ENCODE measurements at regions of chr1 and their contacts with region 1.

Region 1: DNA sequence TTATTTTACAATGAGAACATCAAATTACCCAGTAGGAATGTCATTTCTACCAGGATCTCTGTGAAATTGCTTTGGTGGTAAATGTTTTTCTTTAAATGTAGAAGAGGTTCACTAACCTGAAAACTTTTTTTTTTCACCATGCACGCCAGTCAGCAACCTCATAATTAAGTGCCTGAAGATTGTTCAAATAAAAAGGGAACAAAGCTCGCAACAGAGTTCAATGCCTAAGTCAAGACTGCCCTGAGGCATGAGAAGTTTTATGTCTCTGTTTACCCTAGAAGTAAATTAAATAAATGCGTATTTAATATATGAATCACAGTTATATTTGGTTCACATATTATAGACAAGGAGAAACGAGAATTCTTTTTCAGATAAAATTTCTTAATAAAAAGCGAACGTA is 13.8 kb upstream of the SYDE2 start:
- DNase-seq: no peak
- ATAC-seq: no peak
- H3K4me3 ChIP-seq: no peak overlapping the region
- H3K4me3 Mint-ChIP-seq: no peak overlapping the region
- H3K27ac ChIP-seq: no peak overlapping the region
- H3K27ac Mint-ChIP-seq: no peak overlapping the region
- H3K4me1 ChIP-seq: no peaks in the 10 kb centered on the region
- H3K4me1 Mint-ChIP-seq: no peaks in the 10 kb centered on the region
- H3K27me3 ChIP-seq: peaks cover 0 to 4% of the 10 kb centered on the region in 2 experiments
- H3K27me3 Mint-ChIP-seq: peaks cover 22 to 23% of the 10 kb centered on the region in 2 donors

Region 2: DNA sequence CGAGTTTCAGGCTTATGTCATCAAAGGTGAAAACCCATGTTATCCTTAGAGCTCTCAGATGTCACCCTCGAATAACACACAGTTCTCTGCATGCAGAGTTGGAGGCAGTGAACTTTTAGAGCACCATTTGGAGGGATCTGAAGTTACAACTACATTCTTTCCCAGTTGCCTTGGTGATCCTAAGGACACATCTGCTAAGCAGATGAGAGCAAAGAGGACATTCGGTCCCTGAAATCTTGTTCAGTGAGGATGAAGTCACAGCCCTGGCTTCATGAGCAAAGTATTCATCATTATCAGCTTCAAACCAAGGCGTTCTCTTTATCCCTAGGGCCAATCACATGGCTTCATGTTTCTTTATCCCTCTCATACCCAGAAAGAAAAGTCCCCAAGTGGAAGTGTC is 194.7 kb before region 1 on chr1:
- CTCF ChIA-PET with region 1: interaction called in 1 of 2 experiments, 12 read pairs
- POLR2A ChIA-PET with region 1: no interaction called
- DNase-seq: no peak
- ATAC-seq: no peak
- H3K4me3 ChIP-seq: no peak overlapping the region
- H3K4me3 Mint-ChIP-seq: no peak overlapping the region
- H3K27ac ChIP-seq: no peak overlapping the region
- H3K27ac Mint-ChIP-seq: no peak overlapping the region
- H3K4me1 ChIP-seq: peaks cover 0 to 3% of the 10 kb centered on the region in 2 experiments
- H3K4me1 Mint-ChIP-seq: peaks cover 0 to 2% (median 0%) of the 10 kb centered on the region in 3 donors
- H3K27me3 ChIP-seq: no peaks in the 10 kb centered on the region
- H3K27me3 Mint-ChIP-seq: peaks cover 3% of the 10 kb centered on the region in 2 donors